ENCODE measurements at regions of chr4 and their contacts with region 1.

Region 1: GRCh38 chr4:2059034-2059725 is at the start of gene NAT8L:
- DNase-seq: peak; percentile 65 to 97 (median 83)

Region 2: DNA sequence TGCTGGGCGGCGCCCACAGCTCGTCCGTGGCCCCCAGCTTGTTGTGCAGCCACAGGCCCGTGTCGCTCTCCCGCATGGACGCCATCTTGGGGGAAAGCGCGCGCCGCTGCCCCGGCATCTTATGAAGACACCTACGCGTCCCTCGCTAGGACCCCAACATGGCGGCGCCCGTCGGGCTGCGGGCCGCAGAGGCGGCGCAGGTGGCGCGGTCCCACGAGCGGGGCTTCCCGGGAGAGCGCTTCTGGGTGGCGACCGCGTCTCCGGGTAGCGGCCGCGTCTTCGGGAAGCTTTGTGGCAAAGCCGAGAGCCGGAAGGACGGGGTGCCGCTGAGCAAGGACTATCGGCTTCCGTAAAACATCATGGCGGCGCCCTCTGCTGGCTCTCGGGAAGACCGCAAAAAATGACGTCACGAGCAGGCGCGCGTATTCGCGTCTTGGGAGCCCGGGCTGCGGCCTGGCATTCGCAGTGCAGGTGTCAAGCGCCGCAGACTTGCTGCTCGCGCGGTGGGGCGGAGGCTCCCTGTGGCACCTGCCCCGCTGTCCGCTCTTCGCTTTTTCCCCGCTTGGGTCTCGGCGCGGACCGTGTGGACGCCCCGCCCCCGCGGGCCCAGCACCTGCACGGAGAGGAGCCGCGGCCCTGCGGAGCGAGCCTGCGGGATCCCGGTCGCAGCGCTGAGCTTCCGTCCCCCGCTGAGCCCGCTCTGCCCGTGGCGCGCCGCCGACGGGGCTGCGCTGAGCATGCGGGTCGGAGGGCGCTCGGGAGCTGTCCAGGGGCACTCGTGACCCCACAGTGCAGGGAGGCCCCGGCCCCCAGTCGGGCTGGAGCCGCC is 50.1 kb before region 1 on chr4 and contains the start of gene NELFA:
- intact Hi-C with region 1: loop called (anchors 5 kb)
- DNase-seq: peak; percentile 93 to 99 (median 96)

Region 3: DNA sequence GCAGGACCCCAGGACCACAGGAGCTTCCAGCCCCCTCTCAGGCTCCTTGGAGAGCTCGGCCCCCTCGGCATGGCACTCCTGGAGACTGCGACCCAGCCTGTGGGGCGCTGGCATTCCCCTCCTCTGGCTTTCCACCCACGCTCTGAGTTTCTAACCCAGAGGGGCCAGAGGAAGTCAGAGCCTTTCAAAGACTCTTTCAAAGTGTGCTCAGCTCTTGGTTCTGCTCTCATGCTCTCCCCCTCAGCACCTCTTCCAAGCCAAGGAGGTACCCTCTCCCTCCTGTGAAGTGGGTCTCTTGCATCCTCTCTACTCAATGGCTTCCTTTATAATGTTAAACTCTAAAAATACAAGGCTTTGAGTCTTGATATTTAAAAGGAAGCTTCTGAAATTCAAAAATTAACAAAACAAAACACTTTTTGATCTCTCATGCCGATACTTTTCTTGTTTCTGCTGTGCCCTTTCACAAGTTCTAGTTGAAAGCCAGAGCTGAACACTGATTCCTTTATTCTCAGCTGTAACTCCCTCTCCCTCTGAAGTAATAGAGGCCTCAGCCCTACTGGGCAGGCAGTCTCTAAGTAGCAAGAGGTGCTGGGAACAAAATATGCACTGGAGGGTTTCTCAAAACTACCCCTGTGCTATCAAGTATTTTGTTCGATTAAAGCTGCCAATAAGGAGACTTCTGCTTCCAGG is 82.7 kb after region 1 on chr4:
- intact Hi-C with region 1: loop called (anchors 10 kb)
- DNase-seq: no peak